Left cardiac atrium (tissue), 4 donors: ENCODE measurements at regions of chr14 and their contacts with region 1.

Region 1: DNA sequence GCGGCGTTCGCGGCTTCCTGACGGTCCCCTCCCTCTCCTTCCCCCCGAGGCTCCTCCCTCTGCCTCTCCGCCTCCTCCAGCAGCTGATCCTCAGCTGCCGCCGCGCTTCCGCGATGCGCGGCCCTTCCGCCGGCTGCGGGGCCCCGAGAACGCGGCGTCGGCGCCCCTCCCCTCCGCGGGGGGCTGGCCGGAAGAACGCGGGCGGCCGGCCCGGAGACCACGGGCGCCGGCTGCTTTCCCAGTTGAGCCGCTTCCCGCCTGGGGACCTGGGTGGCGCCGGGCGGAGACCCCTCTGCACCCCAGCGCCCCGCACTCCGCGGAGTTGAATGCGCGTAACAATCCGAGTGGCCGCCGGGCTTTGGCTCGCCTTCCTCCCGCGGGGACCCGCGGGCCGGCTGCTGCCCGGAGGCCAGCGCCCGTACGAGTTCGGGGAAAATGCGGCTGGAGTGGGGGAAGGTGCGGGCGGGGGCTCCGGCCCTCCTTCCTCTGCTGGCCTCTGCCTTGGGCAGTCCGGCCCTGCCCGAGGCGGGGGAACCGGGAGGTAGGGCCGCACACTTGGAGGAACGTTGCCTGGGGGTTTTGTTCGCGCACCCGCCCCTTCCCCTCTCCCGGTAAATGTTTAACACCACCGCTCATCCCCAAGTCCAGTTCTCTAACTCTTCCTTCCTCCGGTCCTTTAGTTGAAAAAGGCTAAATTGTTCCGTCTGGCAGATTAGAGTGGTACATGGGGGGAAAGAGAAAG is 383 bp upstream of the DCAF5 start:
- DNase-seq: peak; percentile 96
- ATAC-seq: peak; percentile 94 to 96

Region 2: DNA sequence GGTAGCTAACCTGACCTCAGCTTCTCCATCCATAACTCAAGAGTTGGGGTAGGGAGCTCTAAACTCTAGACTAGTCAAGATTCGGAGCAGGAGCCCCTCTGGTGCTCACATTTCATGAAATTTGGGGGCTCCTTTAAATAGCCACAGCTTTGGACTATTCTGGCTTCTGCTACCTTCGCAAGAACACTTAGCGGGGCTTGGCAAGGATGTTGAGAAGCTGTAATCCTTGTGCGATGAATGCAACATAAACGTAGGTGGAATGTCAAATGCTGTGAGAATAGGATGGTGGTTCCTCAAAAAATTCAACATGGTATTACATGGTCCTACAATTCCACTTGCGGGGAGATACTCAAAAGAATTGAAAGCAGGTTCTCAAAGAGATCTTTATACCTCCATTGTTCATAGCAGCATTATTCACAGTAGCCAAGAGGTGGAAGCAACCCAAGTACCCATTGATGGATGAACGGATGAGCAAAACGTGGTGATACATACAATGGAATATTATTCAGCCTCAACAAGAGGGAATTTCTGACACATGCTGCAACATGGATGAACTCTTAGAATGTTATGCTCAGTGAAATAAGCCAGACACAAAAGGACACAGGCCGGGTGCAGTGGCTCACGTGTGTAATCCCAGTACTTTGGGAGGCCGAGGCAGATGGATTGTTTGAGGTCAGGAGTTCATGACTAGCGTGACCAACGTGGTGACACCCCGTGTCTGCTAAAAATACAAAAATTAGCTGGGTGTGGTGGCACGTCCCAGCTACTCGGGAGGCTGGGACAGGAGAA is 248.0 kb before region 1 on chr14:
- intact Hi-C with region 1: no loop called
- DNase-seq: no peak
- ATAC-seq: no peak

Region 3: DNA sequence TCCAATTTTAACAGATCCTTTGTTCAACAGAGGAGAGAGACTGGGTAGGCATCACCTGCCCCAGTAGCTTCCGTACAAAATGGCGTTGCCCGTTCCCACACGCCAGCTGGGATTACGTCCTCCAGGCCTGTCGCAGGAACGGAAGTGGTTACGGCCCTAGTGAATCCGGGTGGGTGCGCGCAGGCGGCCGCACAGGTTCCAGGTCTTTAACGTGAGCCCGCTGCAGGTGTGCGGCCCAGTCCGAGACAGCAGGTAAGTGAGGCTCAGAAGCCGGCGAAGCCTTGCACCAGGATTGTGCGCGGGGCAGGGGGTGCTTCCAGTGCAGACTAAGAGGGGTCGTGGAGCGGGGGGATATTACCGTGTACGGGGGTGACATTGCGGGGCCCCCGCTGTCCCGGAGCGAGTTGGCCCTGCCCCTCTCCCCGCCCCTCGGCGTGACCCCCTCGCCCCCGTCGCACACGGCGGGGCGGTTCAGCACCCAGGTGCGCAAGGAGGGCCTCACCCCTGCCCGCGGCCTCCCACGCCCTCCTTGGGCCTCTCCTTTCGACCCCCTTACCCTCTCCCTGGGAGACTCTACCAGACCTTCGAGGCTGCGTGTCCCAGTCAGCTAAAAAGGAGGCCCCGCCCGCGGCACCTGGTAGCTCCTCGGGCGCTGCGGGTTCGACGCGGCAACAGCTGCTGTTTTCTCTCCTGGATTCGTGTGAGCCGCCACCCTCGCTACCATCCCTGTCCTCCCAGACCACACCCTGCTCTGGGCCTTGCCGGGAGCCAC is 38.2 kb after region 1 on chr14 and contains the start of gene EXD2:
- intact Hi-C with region 1: loop called in 1 of 2 experiments (anchors 1 kb)
- DNase-seq: peak; percentile 88
- ATAC-seq: peak; percentile 99
- total RNA-seq, gene EXD2: 15.8 to 17.1 TPM

Region 4: DNA sequence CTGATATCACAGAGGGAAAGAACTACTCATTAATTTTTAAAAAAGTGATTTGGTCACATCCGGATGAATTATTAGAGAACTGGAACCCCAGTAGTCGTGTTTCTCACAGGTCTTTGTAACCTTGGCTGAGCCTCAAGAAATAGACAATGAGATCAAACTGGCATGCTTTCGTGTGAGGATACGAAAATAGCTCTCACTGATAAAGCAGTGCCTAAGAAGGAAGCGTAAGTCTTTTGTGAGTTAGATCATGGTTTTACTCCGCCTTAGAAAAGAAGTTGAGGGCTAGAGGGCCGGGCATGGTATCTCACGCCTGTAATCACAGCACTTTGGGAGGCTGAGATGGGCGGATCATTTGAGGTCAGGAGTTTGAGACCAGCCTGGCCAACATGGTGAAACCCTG is 72.9 kb after region 1 on chr14:
- intact Hi-C with region 1: loop called in 1 of 2 experiments (anchors 10 kb)
- DNase-seq: peak; percentile 35
- ATAC-seq: peak; percentile 82 to 91